IMR-90 (cell line): ENCODE measurements at regions of chr7 and their contacts with region 1.

Region 1: GRCh38 chr7:95469187-95469586 is 16.6 kb upstream of the ASB4 start:
- DNase-seq: no peak
- ATAC-seq: no peak
- H3K4me3 ChIP-seq: no peak overlapping the region
- H3K27ac ChIP-seq: no peak overlapping the region
- H3K4me1 ChIP-seq: no peaks in the 10 kb centered on the region
- H3K27me3 ChIP-seq: peaks cover 13% of the 10 kb centered on the region
- CTCF ChIP-seq: no peak
- POLR2A ChIP-seq: no peak
- RAD21 ChIP-seq: no peak

Region 2: DNA sequence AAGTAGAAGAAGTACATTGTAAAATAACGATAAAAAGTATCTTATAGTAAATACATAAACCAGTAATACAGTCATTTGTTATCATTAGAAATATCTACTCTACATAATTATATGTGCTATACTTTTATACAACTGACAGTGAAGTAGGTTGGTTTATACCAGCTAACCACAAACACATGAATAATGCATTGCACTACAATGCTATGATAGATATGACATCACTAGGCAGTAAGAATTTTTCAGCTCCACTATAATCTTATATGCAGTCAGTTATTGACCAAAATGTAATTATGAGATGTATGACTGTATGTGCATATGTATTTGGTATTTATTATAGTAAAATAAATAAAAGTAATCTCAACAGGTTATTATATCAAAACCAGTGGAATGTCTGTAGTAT is 789.8 kb before region 1 on chr7:
- CTCF ChIA-PET with region 1: no interaction called
- POLR2A ChIA-PET with region 1: no interaction called
- dilution Hi-C with region 1: no loop called
- in situ Hi-C with region 1: no loop called
- intact Hi-C with region 1: no loop called
- DNase-seq: peak; percentile 59
- ATAC-seq: peak; percentile 27; the same call in 1 of the 2 replicates
- H3K4me3 ChIP-seq: no peak overlapping the region
- H3K27ac ChIP-seq: no peak overlapping the region
- H3K4me1 ChIP-seq: no peaks in the 10 kb centered on the region
- H3K27me3 ChIP-seq: no peaks in the 10 kb centered on the region
- CTCF ChIP-seq: no peak
- POLR2A ChIP-seq: no peak
- RAD21 ChIP-seq: no peak

Region 3: GRCh38 chr7:94996369-94996768 is 472.8 kb before region 1 on chr7:
- CTCF ChIA-PET with region 1: no interaction called
- POLR2A ChIA-PET with region 1: interaction called, 22 read pairs
- dilution Hi-C with region 1: no loop called
- in situ Hi-C with region 1: no loop called
- intact Hi-C with region 1: no loop called
- DNase-seq: no peak
- ATAC-seq: no peak
- H3K4me3 ChIP-seq: no peak overlapping the region
- H3K27ac ChIP-seq: no peak overlapping the region
- H3K4me1 ChIP-seq: no peaks in the 10 kb centered on the region
- H3K27me3 ChIP-seq: no peaks in the 10 kb centered on the region
- CTCF ChIP-seq: no peak
- POLR2A ChIP-seq: no peak
- RAD21 ChIP-seq: no peak